Activated T-helper 1 cell treated with anti-CD3 and anti-CD28 coated beads, Interleukin-12 subunit alpha, Interleukin-12 subunit beta, Interleukin-2, Interleukin-4 antibody, amounts not matched to agents 30 ng/mL and 10 ng/mL and 1 ng/mL, durations not matched to agents 14 hours and 24 hours and 36 hours (primary cell): ENCODE measurements at regions of chr1 and their contacts with region 1.

Region 1: DNA sequence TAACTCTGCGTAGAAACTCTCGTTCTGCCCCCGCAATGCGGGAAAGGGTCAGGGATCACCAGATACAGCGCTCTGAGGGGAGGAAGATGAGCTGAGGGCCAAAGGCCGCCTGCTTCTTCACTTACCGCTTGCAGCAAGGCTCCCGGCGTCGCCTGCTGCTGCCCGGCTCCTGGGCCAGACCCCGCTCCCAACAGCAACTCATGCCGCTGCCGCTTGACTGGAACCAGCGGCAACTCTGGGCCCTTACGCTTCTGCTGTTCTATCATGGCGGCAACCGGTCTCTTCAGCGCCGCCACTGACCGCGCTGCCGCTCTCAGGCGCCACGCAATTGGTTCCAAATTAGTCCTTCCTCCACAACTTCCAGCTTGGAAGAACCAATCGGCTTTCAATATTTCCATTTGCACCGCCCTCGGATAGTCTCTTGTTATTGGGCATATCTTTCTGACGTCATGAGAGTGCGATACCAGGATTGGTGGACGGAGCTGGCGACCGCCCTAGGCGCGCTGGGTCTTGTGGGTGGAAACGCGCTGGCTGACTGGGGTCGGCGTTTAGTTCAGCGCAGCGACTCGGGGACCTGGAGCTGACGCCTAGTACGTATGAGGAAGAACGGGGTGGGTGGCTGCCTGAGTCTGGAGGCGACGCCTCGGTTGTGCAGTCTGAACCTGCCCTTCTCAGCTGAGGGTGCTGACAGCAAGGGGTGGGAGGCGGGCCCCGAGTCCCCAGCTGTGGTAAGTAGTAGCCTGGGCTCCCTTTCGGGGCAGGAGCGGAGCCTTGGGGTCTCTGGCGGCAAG is at the starts of genes SNRNP40 and ZCCHC17:
- DNase-seq: peak; percentile 94
- H3K4me3 Mint-ChIP-seq: no peak within 1 kb of the TSS
- H3K27ac Mint-ChIP-seq: no peak within 1 kb of the TSS
- H3K4me1 Mint-ChIP-seq: peaks cover 28% of the 10 kb centered on the region
- H3K27me3 Mint-ChIP-seq: no peaks in the 10 kb centered on the region
- total RNA-seq, gene SNRNP40: 118 and 119 TPM in 2 replicates
- total RNA-seq, gene ZCCHC17: 24.1 and 24.7 TPM in 2 replicates

Region 2: DNA sequence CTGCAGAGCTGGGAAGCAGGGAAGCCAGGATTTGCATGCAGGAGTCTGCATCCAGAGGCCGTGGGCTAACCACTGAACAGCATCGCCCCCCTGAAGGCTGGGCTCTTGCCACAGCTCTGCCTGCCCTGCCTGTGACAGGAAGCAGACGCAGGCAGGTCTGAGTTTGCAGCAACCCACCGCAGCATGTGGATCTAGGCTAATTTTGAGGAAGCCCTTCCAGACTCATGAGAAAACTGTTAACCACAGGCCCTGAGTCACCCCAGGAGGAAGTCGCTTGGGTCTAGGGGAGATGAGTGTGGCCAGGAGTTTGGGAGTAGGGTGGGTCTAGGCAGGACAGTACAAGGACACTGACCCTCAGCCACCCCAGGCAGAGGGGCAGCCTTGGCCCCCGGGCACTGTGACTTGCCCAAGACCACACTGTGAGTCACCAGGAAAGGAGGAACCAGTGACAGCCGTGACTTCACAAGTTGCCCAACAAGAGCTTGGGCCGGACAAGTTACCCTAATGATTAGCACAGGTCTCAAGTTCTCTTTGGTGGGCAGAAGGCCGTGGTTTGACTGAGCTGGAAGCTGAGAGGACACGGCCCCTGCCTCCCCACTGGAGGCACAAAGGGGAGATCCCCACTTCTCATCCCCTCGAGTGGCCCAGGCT is 540.0 kb before region 1 on chr1:
- intact Hi-C with region 1: loop called (anchors 10 kb)
- DNase-seq: peak; percentile 64
- H3K4me3 Mint-ChIP-seq: peak overlapping the region; percentile 99
- H3K27ac Mint-ChIP-seq: peak overlapping the region; percentile 97
- H3K4me1 Mint-ChIP-seq: peaks cover 99% of the 10 kb centered on the region
- H3K27me3 Mint-ChIP-seq: no peaks in the 10 kb centered on the region

Region 3: DNA sequence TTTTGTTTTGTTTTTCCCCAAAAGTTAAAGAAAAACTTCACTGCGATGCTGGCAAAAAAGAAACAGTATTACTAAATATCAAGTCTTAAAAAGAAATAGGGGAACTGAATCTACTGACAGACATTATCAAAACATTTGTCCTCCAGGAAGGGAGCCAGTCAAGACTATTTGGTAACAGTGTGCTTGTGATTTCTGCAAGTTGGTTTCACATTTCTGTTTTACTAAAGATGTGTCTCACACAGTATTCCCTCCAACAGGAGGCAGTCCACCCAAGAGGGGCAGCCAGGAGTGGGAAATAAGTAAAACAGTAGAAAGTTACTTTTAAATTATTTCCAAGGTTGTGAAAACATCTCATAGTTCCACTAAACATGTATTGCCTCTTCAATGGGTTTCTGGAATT is 313.7 kb before region 1 on chr1:
- intact Hi-C with region 1: no loop called
- DNase-seq: no peak
- H3K4me3 Mint-ChIP-seq: no peak overlapping the region
- H3K27ac Mint-ChIP-seq: no peak overlapping the region
- H3K4me1 Mint-ChIP-seq: peaks cover 48% of the 10 kb centered on the region
- H3K27me3 Mint-ChIP-seq: no peaks in the 10 kb centered on the region

Region 4: DNA sequence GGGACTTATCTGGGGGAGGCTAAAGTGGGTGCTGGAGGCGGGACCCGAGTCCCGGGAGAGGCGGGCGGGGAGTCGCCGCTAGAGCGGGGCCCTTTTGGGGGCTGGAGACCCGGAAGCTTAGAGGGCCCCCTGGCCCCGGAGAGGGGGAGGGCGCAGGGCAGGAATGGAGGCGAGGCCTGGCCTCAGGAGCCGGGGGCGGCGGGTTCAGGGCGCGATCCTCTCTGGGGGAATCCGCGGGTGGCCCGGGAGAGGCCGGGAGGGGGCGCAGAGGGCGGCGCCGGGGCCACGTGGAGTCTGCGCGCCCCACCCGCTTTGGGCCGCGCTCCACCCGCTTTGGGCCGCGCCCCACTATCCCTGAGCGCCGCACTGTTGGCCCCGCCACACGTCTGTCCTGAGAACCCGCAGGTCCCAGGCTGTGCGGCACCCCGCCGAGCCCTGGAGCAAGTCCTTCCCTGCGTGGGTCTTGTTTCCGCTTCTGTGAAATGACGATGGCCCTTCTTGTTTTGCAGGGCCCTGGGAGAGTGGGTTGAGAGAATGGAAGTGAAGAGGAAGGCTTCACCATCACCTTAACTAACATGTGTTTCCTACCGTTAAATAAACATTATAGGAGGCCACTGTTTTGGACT is 141.4 kb before region 1 on chr1:
- intact Hi-C with region 1: loop called (anchors 1 kb)
- DNase-seq: peak; percentile 64
- H3K4me3 Mint-ChIP-seq: peak overlapping the region; percentile 94
- H3K27ac Mint-ChIP-seq: peak overlapping the region; percentile 86
- H3K4me1 Mint-ChIP-seq: peaks cover 5% of the 10 kb centered on the region
- H3K27me3 Mint-ChIP-seq: peaks cover 6% of the 10 kb centered on the region

Region 5: DNA sequence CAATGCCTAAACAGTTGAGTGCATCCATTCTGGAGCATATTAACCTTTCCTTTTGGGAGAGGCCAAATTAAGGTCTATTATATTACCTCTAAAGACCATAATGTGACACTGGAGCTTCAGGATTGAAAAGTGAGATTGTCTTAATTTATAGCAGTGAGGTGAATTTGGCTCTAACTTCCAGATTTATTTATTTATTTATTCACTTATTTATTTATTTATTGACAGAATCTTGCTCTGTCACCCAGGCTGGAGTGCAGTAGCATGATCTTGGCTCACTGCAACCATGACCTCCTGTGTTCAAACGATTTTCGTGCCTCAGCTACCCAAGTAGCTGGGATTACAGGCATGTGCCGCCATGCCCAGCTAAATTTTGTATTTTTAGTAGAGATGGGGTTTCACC is 19.2 kb after region 1 on chr1:
- intact Hi-C with region 1: no loop called
- DNase-seq: no peak
- H3K4me3 Mint-ChIP-seq: no peak overlapping the region
- H3K27ac Mint-ChIP-seq: no peak overlapping the region
- H3K4me1 Mint-ChIP-seq: no peaks in the 10 kb centered on the region
- H3K27me3 Mint-ChIP-seq: no peaks in the 10 kb centered on the region

Region 6: DNA sequence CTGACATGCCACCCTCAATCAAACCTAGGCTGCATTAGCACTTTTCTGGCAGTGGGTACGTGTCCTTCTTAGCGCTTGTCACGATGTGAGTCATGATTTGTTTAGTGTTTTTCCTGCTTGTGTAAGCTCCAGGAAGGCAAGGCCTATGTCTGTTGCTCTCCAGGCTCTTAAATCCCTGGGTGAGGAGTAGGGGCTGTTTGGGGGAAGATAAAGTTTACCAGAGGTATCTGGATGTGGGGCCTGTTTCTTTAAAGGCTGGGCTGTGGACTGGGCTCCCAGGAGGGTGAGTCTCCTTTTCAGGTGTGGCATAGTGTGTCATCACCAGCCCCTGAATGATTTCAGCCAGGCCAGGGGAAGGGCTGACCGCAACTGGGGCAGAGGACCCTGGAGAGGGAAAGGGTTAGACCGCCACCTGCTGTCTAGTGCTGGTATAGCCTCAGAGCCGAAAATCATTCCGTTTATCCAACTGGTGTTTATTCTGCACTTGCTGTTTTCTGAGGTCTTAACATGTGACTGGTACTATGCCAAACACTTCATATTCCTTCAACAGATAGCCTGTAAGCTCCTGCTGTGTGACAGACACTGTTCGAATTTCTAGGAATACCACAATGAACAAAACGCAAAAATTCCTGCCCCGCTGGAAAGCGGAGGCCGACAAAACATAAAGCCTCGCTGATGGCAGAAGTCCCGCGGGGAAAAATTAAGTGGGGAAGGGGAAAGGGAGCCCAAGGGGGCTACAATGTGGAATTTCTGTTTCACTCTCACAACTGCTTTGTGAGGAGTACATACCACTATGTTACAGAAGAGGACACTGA is 126.0 kb after region 1 on chr1:
- intact Hi-C with region 1: loop called (anchors 2 kb)
- DNase-seq: peak; percentile 26
- H3K4me3 Mint-ChIP-seq: no peak overlapping the region
- H3K27ac Mint-ChIP-seq: peak overlapping the region; percentile 34
- H3K4me1 Mint-ChIP-seq: peaks cover 7% of the 10 kb centered on the region
- H3K27me3 Mint-ChIP-seq: peaks cover 20% of the 10 kb centered on the region

Region 7: GRCh38 chr1:31644560-31645273 is 348.0 kb after region 1 on chr1 and contains the start of gene PEF1:
- intact Hi-C with region 1: loop called (anchors 1 kb)
- DNase-seq: peak; percentile 98
- H3K4me3 Mint-ChIP-seq: peak within 1 kb of the TSS; percentile 96
- H3K27ac Mint-ChIP-seq: peak within 1 kb of the TSS; percentile 100
- H3K4me1 Mint-ChIP-seq: peaks cover 21% of the 10 kb centered on the region
- H3K27me3 Mint-ChIP-seq: peaks cover 2% of the 10 kb centered on the region
- total RNA-seq, gene PEF1: 57.6 and 66.1 TPM in 2 replicates

Region 8: GRCh38 chr1:32179443-32180185 is 882.9 kb after region 1 on chr1 and contains the start of gene TXLNA:
- intact Hi-C with region 1: loop called (anchors 2 kb)
- DNase-seq: peak; percentile 89
- H3K4me3 Mint-ChIP-seq: peak within 1 kb of the TSS; percentile 96
- H3K27ac Mint-ChIP-seq: peak within 1 kb of the TSS; percentile 93
- H3K4me1 Mint-ChIP-seq: peaks cover 47% of the 10 kb centered on the region
- H3K27me3 Mint-ChIP-seq: no peaks in the 10 kb centered on the region
- total RNA-seq, gene TXLNA: 109 and 110 TPM in 2 replicates

Region 9: GRCh38 chr1:33181921-33182341 is 1885.2 kb after region 1 on chr1 and contains the start of gene TRIM62:
- intact Hi-C with region 1: loop called (anchors 10 kb)
- DNase-seq: peak; percentile 69
- H3K4me3 Mint-ChIP-seq: peak within 1 kb of the TSS; percentile 87
- H3K27ac Mint-ChIP-seq: peak within 1 kb of the TSS; percentile 81
- H3K4me1 Mint-ChIP-seq: peaks cover 28% of the 10 kb centered on the region
- H3K27me3 Mint-ChIP-seq: peaks cover 19% of the 10 kb centered on the region
- total RNA-seq, gene TRIM62: 4.1 and 4.5 TPM in 2 replicates